Activated CD4-positive, alpha-beta T cell treated with anti-CD3 and anti-CD28 coated beads, Interleukin-2, amount 10 ng/mL, durations not matched to agents 24 days and 14 days (primary cell): ENCODE measurements at regions of chr2 and their contacts with region 1.

Region 1: GRCh38 chr2:29130295-29130694 is 15.1 kb downstream of the CLIP4 start:
- DNase-seq: peak; percentile 67
- H3K4me3 Mint-ChIP-seq: peak overlapping the region; percentile 49
- H3K27ac Mint-ChIP-seq: peak overlapping the region; percentile 69
- H3K4me1 Mint-ChIP-seq: peaks cover 22% of the 10 kb centered on the region
- H3K27me3 Mint-ChIP-seq: no peaks in the 10 kb centered on the region

Region 2: DNA sequence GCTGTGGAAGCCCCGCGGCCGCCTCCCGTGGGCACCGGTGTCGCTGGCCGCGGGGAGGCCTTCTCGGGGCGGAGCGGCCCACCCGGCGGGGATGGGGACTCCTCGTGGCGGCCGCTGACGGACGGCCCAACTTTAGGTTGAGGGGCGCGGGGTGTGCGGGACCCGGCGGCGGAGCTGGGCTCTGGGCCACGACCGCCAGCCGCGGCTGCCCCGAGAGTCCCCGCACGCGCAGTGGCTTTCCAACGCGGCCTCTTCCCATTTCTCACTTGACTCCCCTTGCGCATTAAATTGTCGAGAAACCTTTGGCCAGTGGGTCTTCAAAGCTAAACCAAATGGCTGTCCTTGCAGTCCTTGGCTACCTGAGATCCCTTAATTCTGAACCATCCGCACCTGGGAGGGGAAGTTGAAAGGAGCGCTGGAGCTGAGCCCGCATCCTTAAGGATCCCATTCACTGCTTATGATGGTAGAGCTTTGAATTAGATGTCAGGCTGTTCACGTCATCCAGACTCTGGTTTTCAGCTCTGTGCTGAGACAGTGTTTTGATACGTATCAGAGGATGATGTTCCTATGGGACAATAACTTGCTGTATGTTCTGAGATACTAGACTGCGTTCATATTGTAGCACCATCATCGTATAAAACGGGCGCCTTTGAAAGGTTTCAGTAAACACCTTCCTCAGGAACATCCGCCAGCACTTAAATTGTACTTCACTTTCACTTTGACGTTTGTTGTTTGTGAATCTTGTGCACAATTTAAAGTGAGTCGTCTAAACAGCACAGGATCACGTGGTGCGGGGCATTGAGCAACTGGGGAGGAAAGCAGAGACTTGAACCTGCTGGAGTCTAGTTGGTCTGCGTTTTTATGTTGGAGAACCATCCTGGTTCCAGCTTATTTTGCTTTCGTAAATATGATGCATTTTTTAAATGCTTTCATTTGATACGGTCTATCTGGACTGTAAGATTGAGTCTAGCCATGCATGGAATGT is 14.2 kb before region 1 on chr2:
- intact Hi-C with region 1: loop called (anchors 1 kb)
- DNase-seq: peak; percentile 93
- H3K4me3 Mint-ChIP-seq: peak overlapping the region; percentile 85
- H3K27ac Mint-ChIP-seq: peak overlapping the region; percentile 91
- H3K4me1 Mint-ChIP-seq: peaks cover 43% of the 10 kb centered on the region
- H3K27me3 Mint-ChIP-seq: peaks cover 5% of the 10 kb centered on the region